HepG2 (cell line): ENCODE measurements at regions of chr6 and their contacts with region 1.

Region 1: GRCh38 chr6:31680840-31681671 is at the start of gene LY6G5C:
- DNase-seq: peak; percentile 72
- ATAC-seq: peak; percentile 67
- H3K4me3 ChIP-seq: peak within 1 kb of the TSS in 1 of 3 experiments; percentile 22; a peak in 1 of 6 replicates
- H3K27ac ChIP-seq: no peak within 1 kb of the TSS
- H3K4me1 ChIP-seq: peaks cover 26% of the 10 kb centered on the region
- H3K27me3 ChIP-seq: no peaks in the 10 kb centered on the region
- CTCF ChIP-seq: peak; percentile 97
- EP300 ChIP-seq: no peak
- POLR2A ChIP-seq: no peak
- RAD21 ChIP-seq: peak; percentile 97
- total RNA-seq, gene LY6G5C: 0.33 TPM in 1 of 2 replicates, not detected in the other

Region 2: GRCh38 chr6:31366693-31367470 is 314.2 kb before region 1 on chr6:
- CTCF ChIA-PET with region 1: no interaction called
- POLR2A ChIA-PET with region 1: no interaction called
- in situ Hi-C with region 1: no loop called
- intact Hi-C with region 1: no loop called
- DNase-seq: peak; percentile 80
- ATAC-seq: peak; percentile 100
- H3K4me3 ChIP-seq: peak overlapping the region in 1 of 3 experiments; percentile 47; a peak in 1 of 6 replicates
- H3K27ac ChIP-seq: no peak overlapping the region
- H3K4me1 ChIP-seq: 0 out of 2 replicates have a peak, but pooled peaks cover 9% of the 10 kb centered on the region
- H3K27me3 ChIP-seq: peaks cover 2 to 20% of the 10 kb centered on the region in 2 experiments; a peak in 4 of 5 replicates
- CTCF ChIP-seq: peak; percentile 98
- EP300 ChIP-seq: no peak
- POLR2A ChIP-seq: no peak
- RAD21 ChIP-seq: peak; percentile 99

Region 3: DNA sequence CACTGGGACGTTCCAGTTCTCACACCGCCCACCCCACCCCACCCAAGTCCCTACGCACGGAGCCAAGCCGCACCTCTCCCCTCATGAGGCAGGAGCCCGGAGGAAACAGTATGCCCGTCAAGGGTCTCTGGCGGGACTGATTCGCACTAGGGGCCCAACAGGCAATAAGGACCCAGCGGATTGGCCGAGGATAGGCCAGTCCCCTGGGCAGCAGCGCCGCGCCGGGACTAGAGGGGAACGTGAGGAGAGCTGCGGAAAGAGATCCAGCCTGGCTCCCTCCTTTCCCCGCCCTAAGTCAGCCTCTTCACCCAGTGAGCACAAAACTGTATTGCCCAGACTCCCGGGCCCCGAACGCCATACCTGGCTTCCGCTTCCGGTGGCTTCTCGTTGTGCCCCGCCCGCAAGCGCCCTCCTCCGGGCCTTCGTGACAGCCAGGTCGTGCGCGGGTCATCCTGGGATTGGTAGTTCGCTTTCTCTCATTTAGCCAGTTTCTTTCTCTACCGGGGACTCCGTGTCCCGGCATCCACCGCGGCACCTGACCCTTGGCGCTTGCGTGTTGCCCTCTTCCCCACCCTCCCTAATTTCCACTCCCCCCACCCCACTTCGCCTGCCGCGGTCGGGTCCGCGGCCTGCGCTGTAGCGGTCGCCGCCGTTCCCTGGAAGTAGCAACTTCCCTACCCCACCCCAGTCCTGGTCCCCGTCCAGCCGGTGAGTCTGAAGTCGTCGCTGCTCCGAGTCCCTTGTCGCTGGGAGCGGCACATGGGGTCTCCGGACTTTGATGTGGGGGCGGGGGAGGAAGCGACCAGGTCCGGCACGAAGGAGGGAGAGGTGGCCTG is 15.3 kb before region 1 on chr6 and contains the start of gene CSNK2B:
- CTCF ChIA-PET with region 1: no interaction called
- POLR2A ChIA-PET with region 1: interaction called, 14 read pairs
- in situ Hi-C with region 1: no loop called
- intact Hi-C with region 1: no loop called
- DNase-seq: peak; percentile 99
- ATAC-seq: peak; percentile 83
- H3K4me3 ChIP-seq: peak within 1 kb of the TSS; percentile 93 to 98 (median 94)
- H3K27ac ChIP-seq: peak within 1 kb of the TSS; percentile 99
- H3K4me1 ChIP-seq: peaks cover 71% of the 10 kb centered on the region
- H3K27me3 ChIP-seq: no peaks in the 10 kb centered on the region; a peak in 1 of 5 replicates
- CTCF ChIP-seq: peak; percentile 21
- EP300 ChIP-seq: 0 out of 4 replicates have a peak, but pooled peaks of 1 of the 2 experiments have one; percentile 1
- POLR2A ChIP-seq: peak in 1 of 2 experiments; percentile 98; a peak in 2 of 4 replicates
- RAD21 ChIP-seq: peak; percentile 8; the same call in 1 of the 2 replicates
- total RNA-seq, gene CSNK2B: 296 and 316 TPM in 2 replicates

Region 4: GRCh38 chr6:31702819-31703522 is 21.9 kb after region 1 on chr6 and contains the start of gene ABHD16A:
- CTCF ChIA-PET with region 1: no interaction called
- POLR2A ChIA-PET with region 1: interaction called, 5 read pairs
- in situ Hi-C with region 1: no loop called
- intact Hi-C with region 1: loop called (anchors 2 kb)
- DNase-seq: peak; percentile 98
- ATAC-seq: peak; percentile 93
- H3K4me3 ChIP-seq: peak within 1 kb of the TSS; percentile 71 to 84 (median 81)
- H3K27ac ChIP-seq: peak within 1 kb of the TSS; percentile 85
- H3K4me1 ChIP-seq: peaks cover 39% of the 10 kb centered on the region
- H3K27me3 ChIP-seq: peaks cover 0 to 3% of the 10 kb centered on the region in 2 experiments; a peak in 2 of 5 replicates
- CTCF ChIP-seq: peak; percentile 33
- EP300 ChIP-seq: peak; percentile 56 to 79; a peak in 3 of 4 replicates
- POLR2A ChIP-seq: peak; percentile 93 to 96
- RAD21 ChIP-seq: no peak
- total RNA-seq, gene ABHD16A: 16.2 and 43.5 TPM in 2 replicates

Region 5: GRCh38 chr6:31717499-31718222 is 36.6 kb after region 1 on chr6:
- CTCF ChIA-PET with region 1: no interaction called
- POLR2A ChIA-PET with region 1: no interaction called
- in situ Hi-C with region 1: no loop called
- intact Hi-C with region 1: loop called (anchors 5 kb)
- DNase-seq: peak; percentile 74
- ATAC-seq: peak; percentile 93
- H3K4me3 ChIP-seq: no peak overlapping the region
- H3K27ac ChIP-seq: no peak overlapping the region
- H3K4me1 ChIP-seq: peaks cover 25% of the 10 kb centered on the region
- H3K27me3 ChIP-seq: peaks cover 6 to 47% of the 10 kb centered on the region in 2 experiments; a peak in 4 of 5 replicates
- CTCF ChIP-seq: peak; percentile 83
- EP300 ChIP-seq: no peak
- POLR2A ChIP-seq: no peak
- RAD21 ChIP-seq: peak; percentile 88

Region 6: DNA sequence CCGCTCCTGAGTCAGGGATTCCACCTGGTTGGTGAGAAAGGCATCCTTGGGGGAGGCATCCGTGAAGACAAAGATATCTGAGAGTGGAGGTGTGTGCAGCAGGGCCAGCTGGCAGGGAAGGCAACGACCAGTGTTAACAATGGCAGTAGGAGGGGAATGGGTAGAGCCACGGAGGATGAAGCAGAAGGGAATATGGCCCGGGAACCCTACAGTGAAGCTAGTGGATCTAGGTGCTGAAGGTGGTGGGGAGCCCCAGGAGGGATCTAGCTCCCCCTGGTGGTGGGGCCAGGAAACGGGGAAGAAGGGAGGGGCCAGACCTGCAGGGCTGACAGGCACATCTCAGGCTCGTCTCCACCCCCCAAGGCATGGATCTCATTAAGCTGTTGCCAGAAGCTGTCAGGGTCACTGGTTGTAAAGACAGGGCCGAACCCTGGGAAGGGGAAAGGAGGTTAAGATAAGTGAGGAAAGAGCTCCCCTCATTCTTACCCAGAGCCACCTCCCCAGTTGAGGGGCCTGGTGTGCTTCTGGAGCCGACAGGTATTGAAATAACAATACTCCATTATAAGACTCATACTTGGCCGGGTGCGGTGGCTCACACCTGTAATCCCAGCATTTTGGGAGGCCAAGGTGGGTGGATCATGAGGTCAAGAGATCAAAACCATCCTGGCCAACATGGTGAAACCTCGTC is 88.8 kb after region 1 on chr6:
- CTCF ChIA-PET with region 1: interaction called, 30 read pairs
- POLR2A ChIA-PET with region 1: interaction called, 4 read pairs
- in situ Hi-C with region 1: loop called (anchors 5 kb)
- intact Hi-C with region 1: loop called (anchors 1 kb)
- DNase-seq: peak; percentile 71
- ATAC-seq: peak; percentile 61
- H3K4me3 ChIP-seq: no peak overlapping the region
- H3K27ac ChIP-seq: no peak overlapping the region
- H3K4me1 ChIP-seq: peaks cover 44% of the 10 kb centered on the region
- H3K27me3 ChIP-seq: no peaks in the 10 kb centered on the region
- CTCF ChIP-seq: peak; percentile 98
- EP300 ChIP-seq: no peak
- POLR2A ChIP-seq: no peak
- RAD21 ChIP-seq: peak; percentile 96

Region 7: GRCh38 chr6:31822036-31822821 is 141.2 kb after region 1 on chr6:
- CTCF ChIA-PET with region 1: no interaction called
- POLR2A ChIA-PET with region 1: interaction called, 6 read pairs
- in situ Hi-C with region 1: no loop called
- intact Hi-C with region 1: loop called (anchors 2 kb)
- DNase-seq: peak; percentile 67
- ATAC-seq: peak; percentile 47
- H3K4me3 ChIP-seq: peak overlapping the region; percentile 67 to 91 (median 87)
- H3K27ac ChIP-seq: peak overlapping the region; percentile 86
- H3K4me1 ChIP-seq: peaks cover 67% of the 10 kb centered on the region
- H3K27me3 ChIP-seq: no peaks in the 10 kb centered on the region
- CTCF ChIP-seq: 0 out of 2 replicates have a peak, but pooled peaks have one; percentile 13
- EP300 ChIP-seq: peak in 1 of 2 experiments; percentile 65; a peak in 2 of 4 replicates
- POLR2A ChIP-seq: peak in 1 of 2 experiments; percentile 33; a peak in 2 of 4 replicates
- RAD21 ChIP-seq: no peak